ENCODE measurements at regions of chr2 and their contacts with region 1.

Region 1: GRCh38 chr2:3265981-3266924 is 111.4 kb downstream of the EIPR1 start:
- DNase-seq: peak; percentile 60

Region 2: DNA sequence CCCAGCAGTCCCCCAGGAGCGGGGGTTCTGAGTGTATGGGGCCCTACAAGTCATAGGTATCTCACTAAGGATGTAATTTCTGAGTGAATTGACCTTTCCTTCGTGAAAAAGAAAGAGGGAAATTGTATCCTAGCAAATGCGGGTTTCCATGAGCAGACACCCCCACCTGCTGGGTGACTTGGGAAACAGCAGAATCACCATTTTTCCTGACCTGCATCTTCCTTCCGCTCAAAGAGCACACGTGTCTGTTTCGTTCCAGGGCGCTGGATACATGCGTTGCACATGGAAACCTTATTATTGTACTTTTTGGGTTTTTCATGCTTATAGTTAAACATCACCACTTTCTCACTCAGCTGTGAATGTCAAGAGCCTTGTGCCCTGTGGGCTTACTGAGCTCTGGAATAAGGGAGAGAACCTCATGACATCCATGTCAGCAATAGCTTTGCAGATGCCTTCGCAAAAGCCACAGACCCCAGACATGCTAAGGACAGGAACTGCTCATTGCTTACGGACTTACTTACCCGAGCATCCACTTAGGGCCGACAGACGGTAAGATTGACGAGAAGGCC is 1720.1 kb before region 1 on chr2:
- intact Hi-C with region 1: no loop called
- DNase-seq: no peak

Region 3: DNA sequence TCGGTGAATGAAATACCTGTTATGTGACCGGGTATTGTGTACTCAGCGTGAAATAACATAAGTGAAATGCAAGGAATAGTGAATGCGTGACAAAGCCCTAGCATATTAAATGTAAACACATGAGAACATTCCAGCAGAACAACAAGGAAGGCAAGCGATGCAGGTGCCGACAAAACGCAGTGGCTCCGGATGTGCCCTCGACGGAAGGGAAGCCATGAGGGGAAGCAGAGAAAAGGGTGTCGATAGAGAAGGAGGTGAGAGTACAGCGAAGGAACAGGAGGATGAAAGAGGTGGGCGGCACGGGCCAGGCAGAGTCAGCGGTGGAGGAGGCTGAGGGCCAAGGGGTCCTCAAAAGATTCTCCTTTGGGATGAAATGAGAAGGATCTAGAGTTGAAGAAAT is 1662.8 kb after region 1 on chr2:
- intact Hi-C with region 1: loop called in 1 of 2 experiments (anchors 5 kb)
- DNase-seq: no peak